Motor neuron (in vitro differentiated cells): ENCODE measurements at regions of chr15 and their contacts with region 1.

Region 1: DNA sequence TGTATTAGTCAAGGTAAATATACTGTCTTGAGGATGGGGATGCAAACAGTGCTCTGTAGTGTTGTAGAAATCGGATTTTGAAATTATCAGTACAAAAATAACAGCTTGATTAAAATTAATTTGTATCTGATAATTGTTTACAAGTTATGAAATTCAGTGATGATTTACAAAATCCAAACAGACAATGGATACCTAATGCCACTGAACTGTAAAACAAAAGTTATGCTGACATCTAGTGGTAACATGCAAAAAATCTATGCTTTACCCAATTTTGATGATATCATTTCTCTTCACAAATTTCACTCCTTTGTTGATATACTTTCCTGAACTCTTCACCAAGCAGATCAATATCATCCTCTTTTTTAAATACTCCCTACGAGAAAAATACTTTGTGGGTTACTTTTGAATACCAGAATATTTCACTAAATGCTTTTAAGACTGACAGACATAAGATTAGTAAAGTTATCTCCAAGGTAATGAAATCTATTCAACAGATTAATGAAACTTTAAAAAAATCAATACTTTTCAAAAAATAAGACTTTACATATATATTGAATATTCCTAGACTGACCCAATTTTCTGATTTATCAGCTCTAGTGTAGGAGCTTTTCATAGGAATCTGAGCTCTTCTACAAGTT is 36.0 kb downstream of the MNS1 start:
- ATAC-seq: peak in 3 of 8 experiments; percentile 48 to 66 (median 48)
- H3K4me3 ChIP-seq: no peak overlapping the region
- H3K27ac ChIP-seq: no peak overlapping the region
- H3K4me1 ChIP-seq: no peaks in the 10 kb centered on the region

Region 2: DNA sequence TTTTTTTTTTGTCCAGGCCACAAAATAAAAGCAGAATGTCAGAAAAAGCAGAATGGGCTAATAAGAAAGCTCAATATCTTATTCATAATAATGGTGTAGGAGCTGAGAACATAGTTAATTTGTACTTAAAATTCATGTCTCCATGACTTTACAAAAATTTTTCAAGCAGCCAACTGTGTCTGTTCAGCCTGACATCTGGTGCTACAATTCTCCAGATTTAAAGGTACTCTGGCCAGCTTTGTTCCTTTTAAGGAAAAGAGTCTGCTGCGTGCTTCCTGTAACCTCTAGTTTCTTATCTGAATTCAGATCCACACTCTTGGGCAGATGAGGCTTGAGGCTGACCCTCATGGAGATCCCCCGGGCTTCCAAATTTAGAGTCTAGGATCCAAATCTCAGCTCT is 176.6 kb before region 1 on chr15:
- in situ Hi-C with region 1: loop called in 2 of 9 experiments (anchors 5 to 25 kb)
- ATAC-seq: peak in 2 of 8 experiments; percentile 29 to 63
- H3K4me3 ChIP-seq: no peak overlapping the region
- H3K27ac ChIP-seq: no peak overlapping the region
- H3K4me1 ChIP-seq: no peaks in the 10 kb centered on the region

Region 3: DNA sequence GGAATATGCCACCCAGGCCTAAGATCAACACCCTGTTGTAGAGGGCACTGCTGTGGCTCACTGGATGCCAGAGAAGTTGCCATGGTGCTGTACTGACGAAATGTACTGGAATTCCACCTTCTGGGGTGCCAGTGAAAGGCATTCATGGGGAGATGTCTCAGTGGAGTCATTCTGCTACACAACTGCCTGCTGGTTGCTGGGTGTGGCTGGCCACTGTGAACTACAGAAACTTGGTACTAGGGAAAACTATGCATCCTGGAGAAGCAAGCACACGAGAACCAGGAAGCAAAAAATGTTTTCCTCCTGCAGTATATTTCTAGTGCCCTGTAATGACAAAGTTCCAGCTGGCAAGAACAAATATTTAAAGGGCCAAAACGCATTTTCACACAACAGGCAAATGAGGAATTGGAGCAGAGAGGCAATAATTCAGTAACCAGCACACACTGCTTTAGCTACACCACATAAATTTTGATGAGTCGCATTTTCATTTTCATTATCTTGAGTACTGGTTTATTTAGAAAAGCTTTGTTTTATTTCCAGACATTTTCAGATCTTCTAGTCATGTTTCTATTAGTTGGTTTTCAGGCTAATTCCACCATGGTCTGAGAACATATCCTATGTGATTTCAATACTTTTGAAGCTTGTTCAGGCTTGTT is 167.0 kb before region 1 on chr15:
- in situ Hi-C with region 1: loop called in 1 of 9 experiments (anchors 25 kb)
- ATAC-seq: peak in 6 of 8 experiments; percentile 61 to 100 (median 94)
- H3K4me3 ChIP-seq: no peak overlapping the region
- H3K27ac ChIP-seq: no peak overlapping the region
- H3K4me1 ChIP-seq: no peaks in the 10 kb centered on the region

Region 4: DNA sequence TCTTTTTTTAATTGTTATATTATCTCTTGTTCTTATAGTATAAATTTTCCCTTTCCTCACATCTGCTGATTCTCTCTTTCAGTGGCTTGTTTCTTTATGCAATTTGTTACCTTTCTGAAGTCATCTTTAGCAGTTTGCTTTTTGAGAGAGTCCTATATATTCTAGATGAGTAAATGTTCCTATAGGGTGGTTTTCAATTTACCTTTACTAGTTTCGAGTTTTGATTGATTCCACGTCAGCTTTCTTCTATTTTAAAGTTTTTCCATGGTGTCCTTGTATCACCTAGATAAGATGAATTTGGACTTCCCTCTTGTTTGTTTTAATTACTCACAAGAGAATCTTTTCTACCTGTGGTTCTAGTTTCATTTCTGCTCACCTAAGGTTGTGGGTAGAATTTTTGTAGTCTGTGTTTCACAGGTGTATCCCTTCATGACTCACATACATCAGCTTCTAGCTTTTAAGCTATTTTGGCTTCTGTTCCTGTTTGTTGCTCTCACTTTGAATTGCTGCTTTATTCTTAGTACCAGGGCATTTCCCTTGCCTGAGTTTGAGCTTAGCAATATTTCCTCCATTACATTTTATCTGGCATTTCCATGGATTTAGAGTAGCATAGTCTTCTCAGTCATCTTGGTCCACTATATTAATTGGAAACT is 57.3 kb before region 1 on chr15:
- in situ Hi-C with region 1: no loop called
- ATAC-seq: no peak
- H3K4me3 ChIP-seq: no peak overlapping the region
- H3K27ac ChIP-seq: no peak overlapping the region
- H3K4me1 ChIP-seq: peaks cover 4 to 21% of the 10 kb centered on the region in 2 donors